Activated T-helper 2 cell treated with anti-CD3 and anti-CD28 coated beads, Interferon-gamma antibody, Interleukin-2, Interleukin-4, amounts not matched to agents 10 μg/mL and 5 μg/mL and 100 μg/mL, durations not matched to agents 14 hours and 24 hours and 36 hours (primary cell): ENCODE measurements at regions of chr20 and their contacts with region 1.

Region 1: DNA sequence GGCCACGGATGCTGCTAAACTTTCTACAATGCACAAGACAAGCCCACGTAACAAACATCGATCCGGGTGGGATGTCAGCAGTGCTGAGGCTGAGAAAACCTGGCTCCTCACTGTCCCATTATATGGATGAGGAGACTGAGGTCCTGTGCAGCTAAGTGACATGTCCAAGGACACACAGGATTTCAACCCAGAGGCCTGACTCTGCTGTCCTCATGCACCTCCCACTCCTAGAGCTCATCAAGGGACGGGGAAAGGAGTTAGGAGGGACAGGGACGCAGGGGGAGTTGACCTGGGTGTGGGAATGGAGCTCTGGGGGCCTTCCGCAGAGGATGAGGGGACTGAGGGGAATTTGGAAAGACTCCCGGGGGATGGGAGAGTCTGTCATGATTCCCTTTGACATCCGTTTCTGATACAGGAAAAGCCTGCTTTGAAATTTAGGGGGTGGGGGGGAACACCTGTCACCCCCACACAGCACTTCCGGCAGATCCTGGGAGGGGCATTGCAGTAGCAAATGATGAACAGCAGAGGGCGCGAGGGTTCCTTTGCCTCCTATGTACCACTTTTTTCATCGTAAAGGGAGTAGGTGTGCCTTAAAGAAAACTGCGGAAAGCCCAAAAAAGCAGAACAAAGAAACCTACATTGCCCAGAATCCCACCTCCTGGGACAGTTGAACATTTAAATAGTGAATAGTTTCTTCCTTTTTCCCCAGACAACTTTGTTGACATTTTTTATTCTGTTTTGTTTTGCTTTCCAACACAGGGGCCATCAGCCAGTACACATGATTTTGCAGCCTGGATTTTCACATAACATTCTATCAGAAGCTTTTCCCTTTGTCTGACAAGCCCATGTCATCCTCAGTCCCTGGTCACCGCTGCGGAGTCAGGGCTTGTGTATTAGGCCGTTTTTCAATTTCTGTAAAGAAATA is 48.6 kb downstream of the SLC2A10 start:
- DNase-seq: peak; percentile 61
- H3K4me3 Mint-ChIP-seq: no peak overlapping the region
- H3K27ac Mint-ChIP-seq: no peak overlapping the region
- H3K4me1 Mint-ChIP-seq: no peaks in the 10 kb centered on the region
- H3K27me3 Mint-ChIP-seq: peaks cover 1% of the 10 kb centered on the region

Region 2: DNA sequence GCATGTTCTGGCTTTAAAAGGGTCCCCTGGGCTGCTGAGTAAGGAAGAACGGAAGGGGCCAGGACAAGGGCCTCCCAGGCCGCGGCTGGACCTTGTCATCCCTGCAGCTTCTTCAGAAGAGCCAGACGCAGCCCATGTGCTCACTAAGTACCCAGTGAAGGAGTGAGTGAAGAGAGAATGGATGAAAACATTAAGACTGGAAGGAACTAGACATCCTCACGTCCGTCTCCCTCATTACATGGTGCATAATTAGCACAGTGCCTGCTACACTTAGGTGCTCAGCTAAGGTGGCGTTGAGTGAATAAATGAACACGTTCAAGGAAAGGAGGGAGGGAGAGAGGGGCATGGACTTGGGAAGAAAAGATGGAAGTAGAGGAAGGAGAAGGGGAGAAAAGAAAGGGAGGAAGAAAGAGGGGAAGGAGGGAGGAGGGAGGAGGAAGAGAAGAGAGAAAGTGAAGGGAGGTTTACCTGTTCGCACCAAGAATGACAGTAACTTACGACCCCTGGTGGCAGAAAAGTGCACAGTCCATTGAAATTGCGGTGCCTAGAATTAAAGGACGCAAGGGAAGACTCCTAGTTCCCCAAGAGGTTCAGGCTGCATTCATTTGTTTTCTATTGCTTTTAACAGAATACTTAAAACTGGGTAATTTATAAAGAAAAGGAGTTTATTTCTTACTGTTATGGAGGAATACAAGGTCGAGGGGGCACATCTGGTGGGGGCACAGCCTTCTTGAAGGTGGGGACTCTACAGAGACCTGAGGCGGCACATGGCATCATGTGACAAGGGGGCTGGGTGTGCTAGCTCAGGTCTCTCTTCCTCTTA is 76.8 kb before region 1 on chr20:
- intact Hi-C with region 1: no loop called
- DNase-seq: peak; percentile 44
- H3K4me3 Mint-ChIP-seq: no peak overlapping the region
- H3K27ac Mint-ChIP-seq: no peak overlapping the region
- H3K4me1 Mint-ChIP-seq: peaks cover 26% of the 10 kb centered on the region
- H3K27me3 Mint-ChIP-seq: no peaks in the 10 kb centered on the region

Region 3: DNA sequence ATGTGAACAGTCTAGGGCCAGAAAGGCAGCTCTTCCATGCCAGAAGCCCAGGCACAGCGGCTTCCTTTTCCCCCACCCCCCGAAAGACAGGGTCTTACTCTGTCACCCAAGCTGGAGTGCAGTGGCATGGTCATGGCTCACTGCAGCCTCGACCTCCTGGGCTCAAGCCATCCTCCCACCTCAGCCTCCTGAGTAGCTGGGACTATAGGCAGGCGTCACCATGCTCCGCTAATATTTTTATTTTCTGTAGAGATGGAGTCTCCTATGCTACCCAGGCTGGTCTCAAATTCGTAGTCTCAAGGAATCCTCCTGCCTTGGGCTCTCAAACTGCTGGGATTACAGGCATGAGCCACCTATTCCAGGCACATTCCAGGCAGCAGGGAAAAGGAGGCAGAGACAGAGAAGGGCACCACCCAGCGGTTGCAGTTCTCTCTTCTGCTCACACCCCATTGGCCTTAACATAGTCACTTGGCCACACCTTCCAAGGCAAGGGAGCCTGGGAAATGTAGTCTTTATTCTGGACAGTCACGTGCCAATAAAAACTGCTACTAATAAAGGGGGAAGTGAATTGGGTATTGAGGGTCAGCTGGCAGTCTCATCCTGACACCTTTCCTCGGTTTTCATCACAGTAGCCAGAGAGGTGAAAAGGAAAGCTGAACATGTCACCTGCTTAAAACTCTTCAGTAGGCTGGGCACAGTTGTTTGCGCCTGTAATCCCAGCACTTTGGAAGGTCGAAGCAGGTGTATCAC is 392.6 kb after region 1 on chr20:
- intact Hi-C with region 1: loop called (anchors 2 kb)
- DNase-seq: no peak
- H3K4me3 Mint-ChIP-seq: no peak overlapping the region
- H3K27ac Mint-ChIP-seq: no peak overlapping the region
- H3K4me1 Mint-ChIP-seq: no peaks in the 10 kb centered on the region
- H3K27me3 Mint-ChIP-seq: peaks cover 2% of the 10 kb centered on the region